ENCODE measurements at regions of chr12 and their contacts with region 1.

Region 1: GRCh38 chr12:120228291-120229070 is 27.6 kb upstream of the RPLP0 start:
- DNase-seq: peak; percentile 77 to 90 (median 86)
- ATAC-seq: peak; percentile 86
- H3K4me3 ChIP-seq: peak overlapping the region; percentile 21
- H3K4me3 Mint-ChIP-seq: peak overlapping the region; percentile 72 to 89 (median 78)
- H3K27ac ChIP-seq: peak overlapping the region; percentile 61
- H3K27ac Mint-ChIP-seq: peak overlapping the region in 8 of 9 donors; percentile 74 to 94 (median 87)
- H3K4me1 ChIP-seq: peaks cover 57 to 72% of the 10 kb centered on the region in 2 donors
- H3K4me1 Mint-ChIP-seq: peaks cover 58 to 89% (median 82%) of the 10 kb centered on the region in 7 donors
- H3K27me3 ChIP-seq: no peaks in the 10 kb centered on the region
- H3K27me3 Mint-ChIP-seq: no peaks in the 10 kb centered on the region

Region 2: DNA sequence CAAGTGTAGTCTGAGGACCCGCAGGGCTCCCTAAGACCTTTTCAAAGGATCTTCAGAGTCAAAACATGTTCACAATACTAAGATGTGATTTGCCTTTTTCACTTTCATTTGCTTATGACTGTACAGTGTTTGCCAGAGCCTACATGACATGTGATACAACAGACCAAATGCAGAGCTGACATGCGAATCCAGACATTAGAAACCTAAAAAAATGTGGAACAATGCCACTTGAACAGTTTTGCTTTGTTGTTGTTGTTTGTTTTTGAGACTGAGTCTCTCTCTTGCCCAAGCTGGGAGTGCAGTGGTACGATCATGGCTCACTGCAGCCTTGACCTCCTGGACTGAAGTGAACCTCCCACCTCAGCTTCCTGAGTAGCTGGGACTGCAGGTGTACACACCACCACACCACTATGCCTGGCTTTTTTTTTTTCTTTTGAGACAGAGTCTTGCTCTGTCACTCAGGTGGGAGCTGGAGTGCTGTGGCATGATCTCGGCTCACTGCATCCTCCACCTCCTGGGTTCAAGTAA is 106.7 kb before region 1 on chr12:
- CTCF ChIA-PET with region 1: no interaction called
- POLR2A ChIA-PET with region 1: no interaction called
- intact Hi-C with region 1: no loop called
- DNase-seq: peak in 3 of 9 donors; percentile 5 to 19 (median 18)
- ATAC-seq: peak; percentile 17
- H3K4me3 ChIP-seq: no peak overlapping the region
- H3K4me3 Mint-ChIP-seq: peak overlapping the region in 8 of 10 donors; percentile 3 to 56 (median 30)
- H3K27ac ChIP-seq: peak overlapping the region; percentile 39
- H3K27ac Mint-ChIP-seq: peak overlapping the region; percentile 39 to 82 (median 69)
- H3K4me1 ChIP-seq: peaks cover 27 to 31% of the 10 kb centered on the region in 2 donors
- H3K4me1 Mint-ChIP-seq: peaks cover 43 to 62% (median 57%) of the 10 kb centered on the region in 7 donors
- H3K27me3 ChIP-seq: no peaks in the 10 kb centered on the region
- H3K27me3 Mint-ChIP-seq: no peaks in the 10 kb centered on the region

Region 3: DNA sequence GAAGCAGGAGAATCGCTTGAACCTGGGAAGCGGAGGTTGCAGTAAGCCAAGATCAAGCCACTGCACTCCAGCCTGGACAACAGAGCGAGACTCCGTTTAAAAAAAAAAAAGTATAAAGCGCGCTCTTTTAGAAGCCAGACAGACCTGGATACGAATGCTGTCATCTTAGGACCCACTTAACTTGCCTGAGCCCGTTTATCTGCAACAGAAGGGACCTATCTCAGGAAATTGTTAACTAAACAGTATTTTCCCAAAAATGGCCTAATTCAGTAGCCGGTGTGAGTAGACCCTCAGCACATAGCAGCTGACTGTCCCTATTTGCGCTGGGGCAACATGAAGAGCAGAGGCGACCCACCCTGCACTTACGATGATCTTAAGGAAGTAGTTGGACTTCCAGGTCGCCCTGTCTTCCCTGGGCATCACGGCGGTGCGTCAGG is 28.1 kb before region 1 on chr12:
- CTCF ChIA-PET with region 1: interaction called, 21 read pairs
- POLR2A ChIA-PET with region 1: interaction called, 62 read pairs
- intact Hi-C with region 1: loop called (anchors 2 kb)
- DNase-seq: no peak
- ATAC-seq: no peak
- H3K4me3 ChIP-seq: peak overlapping the region; percentile 98
- H3K4me3 Mint-ChIP-seq: peak overlapping the region; percentile 92 to 99 (median 96)
- H3K27ac ChIP-seq: peak overlapping the region; percentile 84
- H3K27ac Mint-ChIP-seq: peak overlapping the region; percentile 94 to 100 (median 97)
- H3K4me1 ChIP-seq: peaks cover 18 to 20% of the 10 kb centered on the region in 2 donors
- H3K4me1 Mint-ChIP-seq: peaks cover 20 to 53% (median 38%) of the 10 kb centered on the region in 7 donors
- H3K27me3 ChIP-seq: no peaks in the 10 kb centered on the region
- H3K27me3 Mint-ChIP-seq: no peaks in the 10 kb centered on the region

Region 4: DNA sequence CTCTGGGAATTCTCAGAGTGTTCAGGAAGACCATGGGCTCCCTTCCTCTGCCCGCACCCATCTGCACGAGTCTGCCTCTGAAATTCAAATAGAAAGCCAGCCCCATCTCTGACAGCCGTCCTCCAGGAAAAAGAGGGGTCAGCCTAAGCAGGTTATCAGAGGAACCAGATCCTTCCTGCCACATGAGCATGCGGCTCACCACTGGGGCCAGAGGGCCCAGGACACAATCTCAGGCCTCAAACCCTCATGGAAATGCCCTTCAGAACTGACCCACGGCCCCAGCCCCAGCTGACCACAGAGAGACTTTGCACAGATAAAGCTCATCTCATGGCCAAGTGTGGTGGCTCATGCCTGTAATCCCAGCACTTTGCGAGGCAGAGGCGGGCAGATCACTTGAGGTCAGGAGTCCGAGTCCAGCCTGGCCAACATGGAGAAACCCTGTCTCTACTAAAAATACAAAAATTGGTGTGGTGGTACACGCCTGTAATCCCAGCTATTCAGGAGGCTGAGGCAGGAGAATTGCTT is 13.9 kb after region 1 on chr12:
- CTCF ChIA-PET with region 1: interaction called, 124 read pairs
- POLR2A ChIA-PET with region 1: interaction called, 205 read pairs
- intact Hi-C with region 1: no loop called
- DNase-seq: no peak
- ATAC-seq: peak; percentile 28
- H3K4me3 ChIP-seq: no peak overlapping the region
- H3K4me3 Mint-ChIP-seq: peak overlapping the region in 4 of 10 donors; percentile 9 to 59 (median 43)
- H3K27ac ChIP-seq: no peak overlapping the region
- H3K27ac Mint-ChIP-seq: peak overlapping the region in 5 of 9 donors; percentile 30 to 75 (median 53)
- H3K4me1 ChIP-seq: peaks cover 48 to 62% of the 10 kb centered on the region in 2 donors
- H3K4me1 Mint-ChIP-seq: peaks cover 45 to 84% (median 74%) of the 10 kb centered on the region in 7 donors
- H3K27me3 ChIP-seq: no peaks in the 10 kb centered on the region
- H3K27me3 Mint-ChIP-seq: no peaks in the 10 kb centered on the region

Region 5: DNA sequence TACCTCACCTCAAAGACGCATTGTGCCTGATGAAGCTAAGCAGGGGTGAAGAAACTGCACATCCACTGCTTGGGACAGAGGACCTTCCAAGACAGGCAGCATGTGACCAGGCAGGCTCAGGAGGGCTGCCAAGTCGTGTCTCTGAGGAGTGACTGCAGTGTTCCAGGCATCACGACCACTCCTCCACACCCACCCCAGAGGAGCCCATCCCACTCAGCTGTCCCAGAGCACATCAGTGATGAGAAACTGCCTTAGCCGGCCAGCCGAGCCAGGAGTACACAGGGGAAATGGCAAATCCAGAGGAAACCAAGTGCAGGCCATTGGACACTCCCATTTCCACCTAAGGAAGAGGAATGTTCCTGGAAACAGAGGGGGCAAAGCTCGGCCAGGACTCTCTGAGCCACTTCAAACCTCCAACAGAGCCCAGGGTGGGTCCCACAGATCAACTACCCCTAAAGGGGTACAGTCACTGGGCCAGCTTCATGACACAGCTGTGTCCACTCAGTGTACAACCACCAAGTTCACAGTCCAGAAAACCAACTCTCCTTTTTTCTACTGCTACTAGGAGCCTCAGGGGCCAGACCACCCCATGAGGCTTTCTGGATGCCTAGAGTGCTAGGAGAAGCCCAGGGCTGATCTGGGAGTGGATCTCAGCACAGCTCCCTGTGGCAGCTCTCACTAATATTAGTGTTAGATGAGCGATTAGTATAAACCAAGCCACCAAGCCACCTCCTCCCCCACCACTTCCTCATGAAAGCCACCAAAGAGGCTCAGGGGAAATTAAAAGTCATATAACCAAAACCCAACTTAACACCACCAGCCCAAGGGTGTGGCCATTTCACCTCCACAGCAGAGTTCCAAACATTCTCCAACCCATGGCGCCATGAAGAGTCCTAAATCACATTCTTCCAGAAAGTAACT is 21.7 kb after region 1 on chr12:
- CTCF ChIA-PET with region 1: interaction called, 124 read pairs
- POLR2A ChIA-PET with region 1: interaction called, 205 read pairs
- intact Hi-C with region 1: loop called (anchors 1 kb)
- DNase-seq: peak in 1 of 9 donors; percentile 37
- ATAC-seq: no peak
- H3K4me3 ChIP-seq: peak overlapping the region; percentile 46
- H3K4me3 Mint-ChIP-seq: peak overlapping the region; percentile 74 to 86 (median 84)
- H3K27ac ChIP-seq: peak overlapping the region; percentile 55
- H3K27ac Mint-ChIP-seq: peak overlapping the region; percentile 88 to 99 (median 96)
- H3K4me1 ChIP-seq: peaks cover 71 to 82% of the 10 kb centered on the region in 2 donors
- H3K4me1 Mint-ChIP-seq: peaks cover 68 to 92% (median 81%) of the 10 kb centered on the region in 7 donors
- H3K27me3 ChIP-seq: no peaks in the 10 kb centered on the region
- H3K27me3 Mint-ChIP-seq: no peaks in the 10 kb centered on the region

Region 6: GRCh38 chr12:120257041-120257821 is 28.8 kb after region 1 on chr12:
- CTCF ChIA-PET with region 1: interaction called, 286 read pairs
- POLR2A ChIA-PET with region 1: interaction called, 215 read pairs
- intact Hi-C with region 1: loop called (anchors 1 kb)
- DNase-seq: peak in 1 of 9 donors; percentile 41
- ATAC-seq: no peak
- H3K4me3 ChIP-seq: no peak overlapping the region
- H3K4me3 Mint-ChIP-seq: peak overlapping the region; percentile 23 to 66 (median 46)
- H3K27ac ChIP-seq: peak overlapping the region; percentile 56
- H3K27ac Mint-ChIP-seq: peak overlapping the region; percentile 72 to 97 (median 89)
- H3K4me1 ChIP-seq: peaks cover 79% of the 10 kb centered on the region in 2 donors
- H3K4me1 Mint-ChIP-seq: peaks cover 77 to 98% (median 93%) of the 10 kb centered on the region in 7 donors
- H3K27me3 ChIP-seq: no peaks in the 10 kb centered on the region
- H3K27me3 Mint-ChIP-seq: no peaks in the 10 kb centered on the region